ENCODE measurements at regions of chr7 and their contacts with region 1.

Region 1: DNA sequence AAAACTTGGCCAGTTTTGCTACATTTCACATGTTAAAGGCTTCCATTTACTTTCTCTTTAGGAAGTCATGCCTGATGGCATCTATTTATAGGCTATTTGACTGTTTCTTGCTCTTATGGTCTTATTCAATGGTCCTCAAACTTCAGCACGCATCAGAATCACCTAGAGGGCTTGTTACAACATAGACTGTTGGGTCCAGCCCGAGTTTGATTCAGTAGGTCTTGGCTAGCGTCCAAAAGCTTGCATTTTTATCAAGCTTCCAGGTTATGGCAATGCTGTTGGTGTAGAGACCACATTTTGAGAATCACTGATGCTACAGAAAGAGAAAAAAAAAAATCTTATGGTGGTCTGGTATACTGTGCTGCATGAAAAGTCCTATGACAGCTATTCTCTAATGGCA is 51.9 kb downstream of the MTPN start:
- DNase-seq: no peak
- H3K4me3 ChIP-seq: no peak overlapping the region
- H3K27ac ChIP-seq: peak overlapping the region; percentile 79
- H3K4me1 ChIP-seq: peaks cover 14% of the 10 kb centered on the region
- H3K27me3 ChIP-seq: no peaks in the 10 kb centered on the region
- CTCF ChIP-seq: no peak
- POLR2A ChIP-seq: no peak

Region 2: GRCh38 chr7:135645296-135645904 is 279.8 kb before region 1 on chr7:
- CTCF ChIA-PET with region 1: no interaction called
- POLR2A ChIA-PET with region 1: no interaction called
- dilution Hi-C with region 1: no loop called
- intact Hi-C with region 1: no loop called
- DNase-seq: peak; percentile 60
- H3K4me3 ChIP-seq: no peak overlapping the region
- H3K27ac ChIP-seq: no peak overlapping the region
- H3K4me1 ChIP-seq: no peaks in the 10 kb centered on the region
- H3K27me3 ChIP-seq: no peaks in the 10 kb centered on the region
- CTCF ChIP-seq: peak; percentile 35 to 57
- POLR2A ChIP-seq: no peak

Region 3: DNA sequence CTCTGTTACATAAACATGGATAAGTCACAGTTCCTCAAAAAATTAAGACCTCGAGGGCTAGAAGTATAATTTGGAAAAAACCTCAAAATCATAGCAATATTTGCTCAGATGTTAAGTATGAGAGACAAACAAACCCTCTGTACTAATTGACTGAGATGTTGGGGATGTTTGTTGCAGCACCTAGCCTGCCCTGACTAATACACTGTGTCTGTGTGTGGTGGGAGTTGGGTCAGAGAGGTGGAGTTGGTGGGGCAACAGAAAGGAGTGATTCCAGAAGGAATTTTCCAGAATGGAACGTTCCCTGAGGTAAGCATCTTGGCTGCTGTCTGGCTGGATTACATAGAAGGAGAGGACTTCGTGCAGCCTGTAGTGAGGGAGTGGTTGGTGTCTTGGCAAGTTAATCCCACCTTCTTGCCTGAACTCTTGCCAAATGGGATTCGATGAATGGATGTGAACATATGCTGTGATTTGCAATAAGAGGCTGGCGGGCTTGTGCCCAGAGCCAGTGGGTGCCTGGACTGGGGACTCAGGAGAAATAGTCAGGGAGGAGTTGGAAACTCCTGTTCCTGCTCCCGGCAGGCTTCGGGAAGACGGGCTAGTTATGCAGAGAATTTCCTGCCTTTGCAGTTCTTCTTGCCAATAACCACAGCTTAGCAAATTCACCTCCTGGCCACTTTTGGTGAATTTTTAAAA is 167.3 kb before region 1 on chr7:
- CTCF ChIA-PET with region 1: no interaction called
- POLR2A ChIA-PET with region 1: interaction called, 14 read pairs
- dilution Hi-C with region 1: no loop called
- intact Hi-C with region 1: no loop called
- DNase-seq: peak; percentile 71
- H3K4me3 ChIP-seq: peak overlapping the region in 1 of 3 experiments; percentile 61
- H3K27ac ChIP-seq: peak overlapping the region; percentile 60
- H3K4me1 ChIP-seq: peaks cover 27% of the 10 kb centered on the region
- H3K27me3 ChIP-seq: no peaks in the 10 kb centered on the region
- CTCF ChIP-seq: no peak
- POLR2A ChIP-seq: peak; percentile 58

Region 4: DNA sequence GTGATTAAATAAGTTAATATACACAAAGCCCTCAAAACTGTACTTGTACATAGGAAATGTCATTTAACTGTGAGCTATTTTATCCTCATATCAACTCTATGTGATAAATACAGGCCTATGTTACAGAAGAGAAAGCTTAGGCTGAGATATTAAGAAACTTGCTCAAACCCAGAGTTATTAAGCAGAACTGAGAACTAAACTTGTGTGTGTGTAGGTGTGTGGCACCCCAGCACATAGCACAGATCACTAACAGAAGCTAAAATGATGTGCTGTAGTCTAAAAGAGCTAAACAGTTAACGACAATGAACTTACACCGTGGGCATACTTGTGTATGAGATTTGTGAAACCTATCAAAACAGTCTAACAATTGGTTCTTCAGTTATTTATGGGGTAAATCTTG is 17.4 kb after region 1 on chr7:
- CTCF ChIA-PET with region 1: interaction called, 3 read pairs
- POLR2A ChIA-PET with region 1: no interaction called
- dilution Hi-C with region 1: no loop called
- intact Hi-C with region 1: loop called (anchors 2 kb)
- DNase-seq: no peak
- H3K4me3 ChIP-seq: no peak overlapping the region
- H3K27ac ChIP-seq: peak overlapping the region; percentile 65
- H3K4me1 ChIP-seq: peaks cover 14% of the 10 kb centered on the region
- H3K27me3 ChIP-seq: no peaks in the 10 kb centered on the region
- CTCF ChIP-seq: no peak
- POLR2A ChIP-seq: no peak